ENCODE measurements at regions of chr1 and their contacts with region 1.

Region 1: DNA sequence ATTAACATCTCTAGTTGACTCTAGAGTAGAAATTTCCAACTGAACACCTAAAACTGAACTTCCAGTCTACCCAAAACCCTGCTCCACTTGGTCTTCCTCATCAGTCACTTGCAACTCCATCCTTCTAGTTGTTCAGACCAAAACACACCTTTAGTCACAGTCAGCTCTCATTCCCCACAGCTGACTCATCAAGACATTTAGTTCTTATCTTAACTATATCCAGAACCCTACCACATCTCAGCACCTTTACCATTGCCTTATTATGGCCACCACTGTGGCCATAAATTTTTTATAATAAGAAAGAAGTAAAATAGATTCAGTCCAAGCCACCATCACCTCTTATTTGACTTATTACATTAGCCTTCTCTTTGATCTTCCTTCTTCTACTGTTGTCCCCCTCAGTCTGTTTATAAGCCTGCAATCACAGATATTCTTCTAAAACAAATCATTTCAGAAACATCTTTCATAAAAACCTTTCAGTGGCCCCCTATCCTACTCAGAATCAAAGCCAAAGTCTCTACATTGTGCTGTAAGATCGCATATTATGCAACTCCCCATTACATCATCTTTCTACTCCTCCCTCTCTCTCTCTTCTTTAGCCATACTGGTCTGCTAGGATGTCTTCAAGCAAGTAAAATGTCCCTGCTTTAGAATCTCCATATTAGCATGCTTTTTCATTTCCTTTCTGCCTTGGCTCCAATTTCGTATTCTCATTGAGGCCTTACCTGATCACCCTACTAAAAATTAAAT is 275.9 kb downstream of the LRRC40 start:
- DNase-seq: no peak
- ATAC-seq: no peak
- H3K4me3 ChIP-seq: no peak overlapping the region
- H3K27ac ChIP-seq: no peak overlapping the region
- H3K4me1 ChIP-seq: no peaks in the 10 kb centered on the region
- H3K27me3 ChIP-seq: no peaks in the 10 kb centered on the region
- CTCF ChIP-seq: no peak
- EP300 ChIP-seq: no peak
- POLR2A ChIP-seq: no peak
- RAD21 ChIP-seq: no peak

Region 2: DNA sequence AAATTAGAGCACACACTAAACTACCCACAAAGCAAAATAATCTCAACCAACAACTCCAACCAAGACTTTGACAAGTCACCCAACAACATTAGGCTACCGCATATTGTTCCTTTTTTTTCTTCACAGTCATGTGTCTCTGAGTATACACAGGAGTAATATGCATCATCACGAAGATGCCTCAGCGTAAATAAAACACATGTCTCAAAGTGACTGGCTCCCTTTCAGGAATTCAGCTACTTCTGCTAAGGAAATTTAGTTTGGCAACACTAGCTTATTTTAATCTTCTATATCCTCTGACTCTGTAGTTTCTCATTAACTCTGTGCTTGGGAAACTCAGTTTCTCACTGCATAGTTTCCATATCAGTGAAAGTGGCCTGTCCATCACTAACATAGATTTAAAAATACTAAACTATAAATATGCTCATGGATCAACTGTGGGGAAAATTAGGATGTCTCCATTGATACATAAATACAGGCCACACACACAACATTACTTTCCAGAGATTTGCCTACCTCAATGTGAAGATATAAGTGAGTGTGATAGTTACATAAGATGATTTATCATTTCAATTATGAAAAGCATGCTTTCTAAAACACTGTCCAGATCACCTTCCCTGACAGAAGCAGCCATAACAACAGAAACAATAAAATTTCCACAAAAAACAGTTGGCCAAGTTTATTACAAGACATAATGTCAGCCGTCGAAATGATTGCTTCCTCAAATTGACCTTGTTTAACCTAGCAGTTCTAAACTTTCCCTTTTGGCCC is 1004.9 kb after region 1 on chr1:
- CTCF ChIA-PET with region 1: no interaction called
- POLR2A ChIA-PET with region 1: no interaction called
- in situ Hi-C with region 1: no loop called
- intact Hi-C with region 1: loop called (anchors 5 kb)
- DNase-seq: no peak
- ATAC-seq: no peak
- H3K4me3 ChIP-seq: no peak overlapping the region
- H3K27ac ChIP-seq: no peak overlapping the region
- H3K4me1 ChIP-seq: no peaks in the 10 kb centered on the region
- H3K27me3 ChIP-seq: no peaks in the 10 kb centered on the region; a peak in 1 of 5 replicates
- CTCF ChIP-seq: no peak
- EP300 ChIP-seq: no peak
- POLR2A ChIP-seq: no peak
- RAD21 ChIP-seq: no peak